ENCODE measurements at regions of chr12 and their contacts with region 1.

Region 1: DNA sequence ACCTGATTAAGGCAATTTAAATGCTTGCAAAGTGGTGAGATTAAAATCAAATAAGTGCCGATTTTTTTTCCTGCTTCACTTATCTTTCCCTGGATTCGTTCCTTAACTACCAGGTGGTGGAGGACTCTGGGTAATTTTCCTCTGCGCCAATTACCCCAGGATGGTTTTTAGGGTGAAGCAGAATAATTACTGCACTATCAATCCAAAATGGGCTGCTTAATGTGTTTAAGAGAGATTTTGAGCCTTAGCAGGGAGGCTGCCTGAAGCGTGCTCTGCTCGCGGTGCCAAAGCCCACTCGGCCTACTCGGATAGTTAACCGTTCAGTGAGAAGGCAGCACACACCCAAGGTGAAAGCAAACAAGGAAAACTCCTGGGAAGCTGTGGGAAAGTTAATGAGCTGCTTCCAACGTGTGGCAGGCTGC is 274.9 kb upstream of the LMO3 start:
- DNase-seq: no peak
- ATAC-seq: no peak
- H3K4me3 ChIP-seq: no peak overlapping the region
- H3K27ac ChIP-seq: no peak overlapping the region
- H3K4me1 ChIP-seq: no peaks in the 10 kb centered on the region
- H3K27me3 ChIP-seq: no peaks in the 10 kb centered on the region
- CTCF ChIP-seq: no peak
- EP300 ChIP-seq: no peak
- POLR2A ChIP-seq: no peak
- RAD21 ChIP-seq: no peak

Region 2: GRCh38 chr12:16863742-16864141 is 17.1 kb before region 1 on chr12:
- CTCF ChIA-PET with region 1: interaction called, 4 read pairs
- POLR2A ChIA-PET with region 1: interaction called, 3 read pairs
- RAD21 ChIA-PET with region 1: interaction called, 19 read pairs
- SMC1A ChIA-PET with region 1: interaction called, 61 read pairs
- in situ Hi-C with region 1: no loop called
- intact Hi-C with region 1: no loop called
- DNase-seq: no peak
- ATAC-seq: no peak
- H3K4me3 ChIP-seq: no peak overlapping the region
- H3K27ac ChIP-seq: no peak overlapping the region
- H3K4me1 ChIP-seq: no peaks in the 10 kb centered on the region
- H3K27me3 ChIP-seq: no peaks in the 10 kb centered on the region
- CTCF ChIP-seq: no peak
- EP300 ChIP-seq: no peak
- POLR2A ChIP-seq: no peak
- RAD21 ChIP-seq: no peak

Region 3: GRCh38 chr12:17016116-17016864 is 135.4 kb after region 1 on chr12:
- CTCF ChIA-PET with region 1: no interaction called
- POLR2A ChIA-PET with region 1: no interaction called
- RAD21 ChIA-PET with region 1: no interaction called
- SMC1A ChIA-PET with region 1: no interaction called
- in situ Hi-C with region 1: no loop called
- intact Hi-C with region 1: no loop called
- DNase-seq: no peak
- ATAC-seq: no peak
- H3K4me3 ChIP-seq: no peak overlapping the region
- H3K27ac ChIP-seq: no peak overlapping the region
- H3K4me1 ChIP-seq: no peaks in the 10 kb centered on the region
- H3K27me3 ChIP-seq: no peaks in the 10 kb centered on the region
- CTCF ChIP-seq: no peak
- EP300 ChIP-seq: no peak
- POLR2A ChIP-seq: no peak
- RAD21 ChIP-seq: no peak

Region 4: DNA sequence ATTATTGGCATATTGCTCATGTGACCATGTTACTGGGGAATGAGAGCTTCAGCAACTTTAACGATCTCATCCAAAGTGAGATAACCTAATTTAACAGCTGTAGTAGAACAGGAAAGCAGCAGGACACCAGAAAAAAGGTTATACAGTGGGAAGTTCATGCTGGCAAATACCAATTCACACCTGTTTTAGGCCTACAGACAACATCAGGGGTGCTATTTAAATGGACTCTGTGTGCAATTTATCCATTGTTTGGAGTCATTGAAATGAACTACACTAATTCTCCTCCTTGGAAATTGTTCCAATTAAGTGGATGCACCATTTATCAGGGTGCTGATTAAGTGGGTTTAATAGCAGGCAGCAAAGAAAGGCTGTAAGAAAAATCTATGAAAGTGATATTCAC is 149.5 kb after region 1 on chr12:
- CTCF ChIA-PET with region 1: no interaction called
- POLR2A ChIA-PET with region 1: no interaction called
- RAD21 ChIA-PET with region 1: no interaction called
- SMC1A ChIA-PET with region 1: no interaction called
- in situ Hi-C with region 1: no loop called
- intact Hi-C with region 1: no loop called
- DNase-seq: no peak
- ATAC-seq: no peak
- H3K4me3 ChIP-seq: no peak overlapping the region
- H3K27ac ChIP-seq: no peak overlapping the region
- H3K4me1 ChIP-seq: no peaks in the 10 kb centered on the region
- H3K27me3 ChIP-seq: no peaks in the 10 kb centered on the region
- CTCF ChIP-seq: no peak
- EP300 ChIP-seq: no peak
- POLR2A ChIP-seq: no peak
- RAD21 ChIP-seq: no peak